GM12878 (cell line): ENCODE measurements at regions of chr3 and their contacts with region 1.

Region 1: GRCh38 chr3:51384726-51385473 is at the start of gene MANF:
- DNase-seq: peak; percentile 93
- ATAC-seq: peak; percentile 97
- H3K4me3 ChIP-seq: peak within 1 kb of the TSS; percentile 96
- H3K27ac ChIP-seq: peak within 1 kb of the TSS; percentile 86
- H3K4me1 ChIP-seq: peaks cover 16% of the 10 kb centered on the region
- H3K27me3 ChIP-seq: no peaks in the 10 kb centered on the region
- CTCF ChIP-seq: peak in 1 of 3 experiments; percentile 6; a peak in 1 of 6 replicates
- EP300 ChIP-seq: peak in 1 of 2 experiments; percentile 13; a peak in 1 of 4 replicates
- POLR2A ChIP-seq: peak; percentile 98
- RAD21 ChIP-seq: no peak
- polyA plus RNA-seq, gene MANF: 22.0 to 68.0 TPM

Region 2: GRCh38 chr3:50358911-50359759 is 1025.8 kb before region 1 on chr3 and contains the start of gene TMEM115:
- CTCF ChIA-PET with region 1: no interaction called
- POLR2A ChIA-PET with region 1: no interaction called
- RAD21 ChIA-PET with region 1: no interaction called
- SMC1A ChIA-PET with region 1: interaction called, 3 read pairs
- in situ Hi-C with region 1: loop called (anchors 10 kb)
- intact Hi-C with region 1: no loop called
- DNase-seq: peak; percentile 93
- ATAC-seq: peak; percentile 99
- H3K4me3 ChIP-seq: peak within 1 kb of the TSS; percentile 78
- H3K27ac ChIP-seq: peak within 1 kb of the TSS; percentile 63
- H3K4me1 ChIP-seq: peaks cover 18% of the 10 kb centered on the region
- H3K27me3 ChIP-seq: no peaks in the 10 kb centered on the region
- CTCF ChIP-seq: no peak
- EP300 ChIP-seq: no peak
- POLR2A ChIP-seq: peak; percentile 83
- RAD21 ChIP-seq: no peak
- polyA plus RNA-seq, gene TMEM115: 1.9 to 2.5 TPM

Region 3: DNA sequence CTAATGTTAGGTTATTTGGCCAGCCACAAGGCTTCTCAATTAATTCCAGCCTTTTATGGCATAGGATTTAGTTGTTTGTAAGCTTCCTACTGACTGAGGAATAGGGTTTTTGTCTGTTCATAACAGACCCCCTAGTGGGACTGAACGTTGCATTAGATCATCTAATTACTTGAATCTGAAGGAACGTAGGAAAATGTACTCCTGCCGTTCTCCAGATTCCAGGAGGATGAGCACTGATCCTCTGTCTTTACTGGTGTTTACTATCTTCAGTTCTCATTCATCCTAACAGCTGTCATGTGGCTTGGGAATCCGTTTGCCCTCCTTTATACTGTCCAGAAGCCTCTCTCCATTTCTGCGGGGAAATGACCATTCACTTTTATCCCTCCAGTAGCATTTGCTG is 206.3 kb after region 1 on chr3:
- CTCF ChIA-PET with region 1: no interaction called
- POLR2A ChIA-PET with region 1: no interaction called
- RAD21 ChIA-PET with region 1: no interaction called
- SMC1A ChIA-PET with region 1: no interaction called
- in situ Hi-C with region 1: no loop called
- intact Hi-C with region 1: no loop called
- DNase-seq: no peak
- ATAC-seq: no peak
- H3K4me3 ChIP-seq: no peak overlapping the region
- H3K27ac ChIP-seq: no peak overlapping the region
- H3K4me1 ChIP-seq: no peaks in the 10 kb centered on the region
- H3K27me3 ChIP-seq: no peaks in the 10 kb centered on the region
- CTCF ChIP-seq: no peak
- EP300 ChIP-seq: no peak
- POLR2A ChIP-seq: no peak
- RAD21 ChIP-seq: no peak